ENCODE measurements at regions of chr4 and their contacts with region 1.

Region 1: GRCh38 chr4:185774845-185775680 is 36.9 kb downstream of the SORBS2 start:
- DNase-seq: peak in 1 of 3 donors; percentile 50
- ATAC-seq: peak; percentile 55 to 70
- H3K4me3 ChIP-seq: peak overlapping the region; percentile 76
- H3K27ac ChIP-seq: peak overlapping the region; percentile 94
- H3K4me1 ChIP-seq: peaks cover 4% of the 10 kb centered on the region
- H3K27me3 ChIP-seq: no peaks in the 10 kb centered on the region

Region 2: DNA sequence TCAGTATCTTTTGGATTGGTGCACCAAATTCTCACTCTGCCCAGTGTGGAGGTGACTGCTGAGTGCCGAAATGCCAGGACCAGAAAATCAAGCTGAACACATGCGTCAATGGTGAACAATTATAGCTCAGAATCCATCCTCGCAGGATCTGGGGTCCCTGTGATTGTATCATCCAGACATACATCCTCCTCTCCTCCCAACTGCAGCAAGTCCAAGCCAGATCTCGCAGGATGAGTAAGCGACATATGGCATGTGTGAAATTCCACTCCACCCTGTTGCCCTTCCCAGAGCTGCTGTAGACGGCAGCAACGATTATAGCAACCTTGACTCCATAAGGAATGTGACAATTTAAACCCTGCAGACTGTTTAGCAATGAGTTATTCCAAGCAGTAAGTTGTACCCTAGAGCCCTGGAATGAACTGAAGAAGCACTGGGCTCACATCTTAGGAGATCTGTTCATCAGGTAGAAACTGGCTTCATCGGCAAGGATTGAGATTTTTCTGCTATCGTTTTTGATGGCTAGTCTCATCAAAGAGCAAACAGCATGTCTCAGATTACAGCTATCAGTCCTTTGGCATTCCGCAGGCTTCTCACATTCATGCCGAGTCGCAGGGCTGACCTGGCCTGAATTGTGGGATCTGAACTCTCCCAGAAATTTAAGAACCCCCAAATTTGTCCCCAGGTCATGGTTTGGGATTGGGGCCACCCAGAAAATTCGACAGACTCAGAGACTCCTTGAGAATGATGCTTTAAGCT is 72.5 kb after region 1 on chr4:
- intact Hi-C with region 1: no loop called
- DNase-seq: peak; percentile 69 to 85 (median 84)
- ATAC-seq: peak; percentile 88 to 92
- H3K4me3 ChIP-seq: no peak overlapping the region
- H3K27ac ChIP-seq: peak overlapping the region; percentile 89
- H3K4me1 ChIP-seq: peaks cover 6% of the 10 kb centered on the region
- H3K27me3 ChIP-seq: no peaks in the 10 kb centered on the region

Region 3: DNA sequence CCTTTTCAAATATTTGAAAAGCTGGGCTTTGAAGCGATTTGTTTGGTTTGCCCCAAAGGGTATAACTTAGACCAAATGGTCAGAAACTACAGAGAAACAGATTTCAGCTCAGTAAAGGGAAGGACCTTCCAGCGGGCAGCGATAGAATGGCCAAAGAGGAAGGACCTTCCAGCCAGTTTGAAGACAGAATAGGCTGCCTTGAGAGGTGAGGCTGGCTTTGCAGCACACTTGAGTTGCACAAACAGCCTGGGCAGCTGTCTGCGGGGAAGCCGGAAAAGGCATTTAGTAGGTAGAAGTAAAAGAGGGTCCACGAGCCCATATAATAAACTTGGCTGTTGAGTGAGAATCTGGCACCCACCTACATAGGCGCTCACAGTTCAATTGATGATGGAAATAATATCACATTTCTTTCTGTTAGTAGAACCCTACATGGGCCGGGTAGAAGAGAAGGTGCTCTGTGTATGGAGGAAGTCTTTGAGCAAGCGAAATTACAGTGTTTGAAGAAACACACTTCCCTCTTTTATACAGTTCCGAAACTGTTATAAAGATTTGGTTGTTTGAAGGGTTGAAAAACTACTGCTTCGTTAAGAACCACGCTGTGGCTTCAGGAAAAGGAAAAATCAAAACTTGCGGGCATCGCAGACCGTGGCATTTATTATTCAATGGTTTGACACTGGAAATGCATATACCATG is 111.9 kb after region 1 on chr4:
- intact Hi-C with region 1: no loop called
- DNase-seq: no peak
- ATAC-seq: no peak
- H3K4me3 ChIP-seq: no peak overlapping the region
- H3K27ac ChIP-seq: no peak overlapping the region
- H3K4me1 ChIP-seq: no peaks in the 10 kb centered on the region
- H3K27me3 ChIP-seq: no peaks in the 10 kb centered on the region

Region 4: DNA sequence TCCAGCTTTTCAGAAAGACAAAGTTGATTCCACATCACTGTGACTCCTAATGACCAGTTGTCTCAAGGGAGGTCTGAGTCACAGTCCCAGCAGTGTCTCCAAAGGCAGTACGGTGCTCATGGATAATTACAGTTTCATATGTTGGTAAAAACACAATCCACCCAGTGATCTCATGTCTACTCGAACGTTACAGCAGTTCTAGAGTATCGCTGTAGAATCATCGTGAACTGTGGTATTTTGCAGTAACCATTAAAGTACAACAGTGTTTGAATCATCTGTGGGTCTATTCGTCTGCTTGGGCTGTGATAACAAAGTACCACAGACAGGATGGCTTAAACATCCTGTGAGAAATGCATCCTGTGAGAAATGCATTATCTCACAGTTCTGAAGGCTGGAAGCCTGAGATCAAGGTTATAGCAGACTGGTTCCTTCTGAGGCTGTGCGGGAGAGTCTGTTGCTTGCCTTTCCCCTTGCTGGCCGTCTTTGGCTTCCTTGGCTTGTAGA is 158.1 kb after region 1 on chr4:
- intact Hi-C with region 1: loop called in 1 of 4 experiments (anchors 5 kb)
- DNase-seq: peak in 1 of 3 donors; percentile 23
- ATAC-seq: peak; percentile 11 to 58
- H3K4me3 ChIP-seq: no peak overlapping the region
- H3K27ac ChIP-seq: no peak overlapping the region
- H3K4me1 ChIP-seq: no peaks in the 10 kb centered on the region
- H3K27me3 ChIP-seq: no peaks in the 10 kb centered on the region

Region 5: GRCh38 chr4:186485561-186486062 is 710.5 kb after region 1 on chr4:
- intact Hi-C with region 1: no loop called
- DNase-seq: peak; percentile 38 to 74 (median 59)
- ATAC-seq: peak in 1 of 2 donors; percentile 65
- H3K4me3 ChIP-seq: no peak overlapping the region
- H3K27ac ChIP-seq: no peak overlapping the region
- H3K4me1 ChIP-seq: no peaks in the 10 kb centered on the region
- H3K27me3 ChIP-seq: no peaks in the 10 kb centered on the region

Measured in right cardiac atrium (tissue), 5 donors.